ENCODE measurements at regions of chr1 and their contacts with region 1.

Region 1: DNA sequence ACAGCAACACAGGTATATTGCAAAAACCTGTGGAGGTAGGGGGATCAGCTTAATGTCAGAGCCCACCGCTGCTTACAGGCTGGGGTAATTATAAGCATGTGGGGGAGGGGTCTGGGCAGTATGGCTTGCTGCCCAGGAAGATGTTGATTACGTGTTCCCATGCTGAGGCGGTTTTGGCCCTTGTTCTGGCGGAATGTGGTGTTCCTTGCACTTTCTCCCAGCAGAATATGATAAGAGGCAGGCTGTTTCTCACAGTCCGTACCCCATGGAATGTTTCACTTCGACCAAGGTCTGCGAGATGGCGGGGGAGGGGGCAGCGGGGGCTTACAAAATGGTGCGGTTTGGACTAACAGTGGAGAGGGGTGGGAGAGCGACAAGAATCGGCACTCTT is 9.8 kb upstream of the HPCAL4 start:
- DNase-seq: no peak
- ATAC-seq: peak; percentile 19; the same call in 1 of the 3 replicates
- H3K4me3 ChIP-seq: 0 out of 6 replicates have a peak overlapping the region, but pooled peaks of 1 of the 3 experiments have one; percentile 4
- H3K27ac ChIP-seq: no peak overlapping the region
- H3K4me1 ChIP-seq: peaks cover 11% of the 10 kb centered on the region
- H3K27me3 ChIP-seq: peaks cover 0 to 12% of the 10 kb centered on the region in 2 experiments; a peak in 1 of 5 replicates
- CTCF ChIP-seq: no peak
- EP300 ChIP-seq: no peak
- POLR2A ChIP-seq: no peak
- RAD21 ChIP-seq: no peak

Region 2: GRCh38 chr1:39653546-39654031 is 47.5 kb before region 1 on chr1:
- CTCF ChIA-PET with region 1: no interaction called
- POLR2A ChIA-PET with region 1: no interaction called
- in situ Hi-C with region 1: no loop called
- intact Hi-C with region 1: no loop called
- DNase-seq: peak; percentile 44
- ATAC-seq: peak; percentile 74
- H3K4me3 ChIP-seq: no peak overlapping the region
- H3K27ac ChIP-seq: no peak overlapping the region
- H3K4me1 ChIP-seq: no peaks in the 10 kb centered on the region
- H3K27me3 ChIP-seq: peaks cover 3 to 40% of the 10 kb centered on the region in 2 experiments; a peak in 4 of 5 replicates
- CTCF ChIP-seq: peak; percentile 88
- EP300 ChIP-seq: no peak
- POLR2A ChIP-seq: no peak
- RAD21 ChIP-seq: peak; percentile 60

Region 3: GRCh38 chr1:39799770-39800470 is 98.9 kb after region 1 on chr1:
- CTCF ChIA-PET with region 1: interaction called, 4 read pairs
- POLR2A ChIA-PET with region 1: no interaction called
- in situ Hi-C with region 1: loop called (anchors 5 kb)
- intact Hi-C with region 1: loop called (anchors 1 kb)
- DNase-seq: peak; percentile 52
- ATAC-seq: peak; percentile 77
- H3K4me3 ChIP-seq: no peak overlapping the region
- H3K27ac ChIP-seq: no peak overlapping the region
- H3K4me1 ChIP-seq: peaks cover 20% of the 10 kb centered on the region
- H3K27me3 ChIP-seq: no peaks in the 10 kb centered on the region
- CTCF ChIP-seq: peak; percentile 72
- EP300 ChIP-seq: no peak
- POLR2A ChIP-seq: no peak
- RAD21 ChIP-seq: peak; percentile 37; the same call in 1 of the 2 replicates

Measured in HepG2 (cell line).